Mammary epithelial cell (primary cell): ENCODE measurements at regions of chr1 and their contacts with region 1.

Region 1: GRCh38 chr1:43991476-43992231 is at the start of gene CCDC24:
- DNase-seq: peak; percentile 83
- H3K4me3 ChIP-seq: peak within 1 kb of the TSS; percentile 40 to 81 (median 55)
- H3K27ac ChIP-seq: peak within 1 kb of the TSS; percentile 77
- H3K4me1 ChIP-seq: peaks cover 14% of the 10 kb centered on the region
- H3K27me3 ChIP-seq: no peaks in the 10 kb centered on the region
- CTCF ChIP-seq: no peak
- total RNA-seq, gene CCDC24: 5.8 to 10.5 TPM

Region 2: GRCh38 chr1:43836267-43836951 is 155.2 kb before region 1 on chr1:
- CTCF ChIA-PET with region 1: no interaction called
- dilution Hi-C with region 1: no loop called
- in situ Hi-C with region 1: no loop called
- intact Hi-C with region 1: no loop called
- DNase-seq: peak; percentile 84
- H3K4me3 ChIP-seq: no peak overlapping the region
- H3K27ac ChIP-seq: peak overlapping the region; percentile 56
- H3K4me1 ChIP-seq: peaks cover 69% of the 10 kb centered on the region
- H3K27me3 ChIP-seq: no peaks in the 10 kb centered on the region
- CTCF ChIP-seq: no peak

Region 3: DNA sequence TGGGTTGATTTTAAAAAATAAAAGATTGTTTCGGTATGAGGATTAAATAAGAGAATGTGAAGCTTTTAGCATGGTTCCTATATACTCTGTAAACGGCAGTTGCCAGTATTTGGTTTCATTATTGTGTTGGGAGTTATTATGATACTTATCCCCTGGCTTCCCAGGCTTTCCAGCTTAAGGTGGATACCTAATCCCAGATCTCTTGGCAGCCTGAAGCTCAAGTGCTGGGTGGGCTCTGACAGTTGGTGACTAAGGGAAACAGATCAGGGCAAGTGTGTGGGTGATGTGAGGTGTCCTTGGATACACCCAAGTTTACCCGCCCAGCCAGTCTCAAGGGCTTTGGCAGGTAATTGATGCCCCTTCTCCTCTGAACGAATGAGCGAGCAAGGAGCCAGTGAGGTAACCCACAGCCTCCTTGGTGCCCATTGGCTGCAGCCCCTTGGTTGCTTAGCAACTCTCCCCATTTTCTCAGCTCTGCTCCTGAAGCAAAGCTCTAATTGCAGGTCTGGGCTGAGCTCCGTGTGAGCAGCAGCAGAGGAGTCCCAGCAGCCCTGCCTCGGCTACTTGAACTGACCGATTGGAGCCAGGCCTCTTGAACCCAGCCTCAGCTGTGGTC is 38.8 kb before region 1 on chr1:
- CTCF ChIA-PET with region 1: no interaction called
- dilution Hi-C with region 1: loop called (anchors 5 kb)
- in situ Hi-C with region 1: no loop called
- intact Hi-C with region 1: no loop called
- DNase-seq: no peak
- H3K4me3 ChIP-seq: no peak overlapping the region
- H3K27ac ChIP-seq: no peak overlapping the region
- H3K4me1 ChIP-seq: peaks cover 14% of the 10 kb centered on the region
- H3K27me3 ChIP-seq: no peaks in the 10 kb centered on the region
- CTCF ChIP-seq: no peak

Region 4: DNA sequence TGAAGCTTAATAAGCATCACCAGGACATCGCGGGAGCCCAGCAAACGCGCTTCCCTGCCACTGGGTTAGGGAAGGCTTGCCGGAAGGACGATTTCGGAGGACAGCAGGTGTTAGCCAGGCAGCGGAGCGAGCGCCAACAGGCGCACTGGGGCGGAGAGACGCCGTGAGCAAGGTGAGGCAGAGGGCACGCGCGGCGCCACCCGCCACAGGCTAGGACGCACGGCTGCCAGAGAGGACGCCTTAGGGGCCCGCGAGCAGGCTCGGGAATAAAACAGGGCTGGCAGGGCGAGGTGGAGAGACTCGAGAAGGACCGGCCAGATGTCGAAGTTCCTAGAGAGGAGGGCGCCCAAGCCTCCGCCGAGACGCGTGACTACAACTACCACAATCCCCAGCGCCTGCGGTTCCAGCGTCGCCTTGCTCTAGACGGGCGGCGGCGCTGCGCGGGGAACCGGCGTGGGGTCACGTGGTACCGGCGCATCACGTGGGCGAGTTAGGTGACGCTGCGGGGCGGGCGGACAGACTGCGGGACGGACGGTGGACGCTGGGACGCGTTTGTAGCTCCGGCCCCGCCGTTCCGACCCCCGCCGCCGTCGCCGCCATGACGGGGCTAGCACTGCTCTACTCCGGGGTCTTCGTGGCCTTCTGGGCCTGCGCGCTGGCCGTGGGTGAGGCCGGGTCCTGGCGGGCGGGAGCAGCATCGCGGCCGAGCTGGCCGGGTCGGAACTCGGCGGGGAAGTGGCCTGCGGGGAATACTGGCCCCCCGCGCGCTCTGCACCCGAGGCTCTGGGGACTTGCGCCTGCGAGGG is 17.0 kb before region 1 on chr1 and contains the start of gene ATP6V0B:
- CTCF ChIA-PET with region 1: interaction called, 16 read pairs
- dilution Hi-C with region 1: no loop called
- in situ Hi-C with region 1: no loop called
- intact Hi-C with region 1: no loop called
- DNase-seq: peak; percentile 93
- H3K4me3 ChIP-seq: peak within 1 kb of the TSS; percentile 86 to 94 (median 89)
- H3K27ac ChIP-seq: peak within 1 kb of the TSS; percentile 64
- H3K4me1 ChIP-seq: peaks cover 39% of the 10 kb centered on the region
- H3K27me3 ChIP-seq: no peaks in the 10 kb centered on the region
- CTCF ChIP-seq: no peak
- total RNA-seq, gene ATP6V0B: 84.4 to 127 TPM

Region 5: GRCh38 chr1:44029906-44030604 is 38.4 kb after region 1 on chr1:
- CTCF ChIA-PET with region 1: no interaction called
- dilution Hi-C with region 1: loop called (anchors 5 kb)
- in situ Hi-C with region 1: no loop called
- intact Hi-C with region 1: no loop called
- DNase-seq: peak; percentile 88
- H3K4me3 ChIP-seq: peak overlapping the region; percentile 78 to 87 (median 83)
- H3K27ac ChIP-seq: peak overlapping the region; percentile 83
- H3K4me1 ChIP-seq: peaks cover 29% of the 10 kb centered on the region
- H3K27me3 ChIP-seq: no peaks in the 10 kb centered on the region
- CTCF ChIP-seq: no peak

Region 6: GRCh38 chr1:44084998-44085675 is 93.5 kb after region 1 on chr1:
- CTCF ChIA-PET with region 1: no interaction called
- dilution Hi-C with region 1: loop called (anchors 5 kb)
- in situ Hi-C with region 1: no loop called
- intact Hi-C with region 1: no loop called
- DNase-seq: peak; percentile 44
- H3K4me3 ChIP-seq: no peak overlapping the region
- H3K27ac ChIP-seq: no peak overlapping the region
- H3K4me1 ChIP-seq: peaks cover 9% of the 10 kb centered on the region
- H3K27me3 ChIP-seq: no peaks in the 10 kb centered on the region
- CTCF ChIP-seq: no peak

Region 7: GRCh38 chr1:44249543-44249942 is 257.9 kb after region 1 on chr1:
- CTCF ChIA-PET with region 1: no interaction called
- dilution Hi-C with region 1: no loop called
- in situ Hi-C with region 1: no loop called
- intact Hi-C with region 1: no loop called
- DNase-seq: no peak
- H3K4me3 ChIP-seq: no peak overlapping the region
- H3K27ac ChIP-seq: no peak overlapping the region
- H3K4me1 ChIP-seq: no peaks in the 10 kb centered on the region
- H3K27me3 ChIP-seq: no peaks in the 10 kb centered on the region
- CTCF ChIP-seq: no peak